BJ (cell line): ENCODE measurements at regions of chr6 and their contacts with region 1.

Region 1: GRCh38 chr6:149065658-149066556 is 251.6 kb upstream of the TAB2 start:
- DNase-seq: no peak
- H3K4me3 ChIP-seq: no peak overlapping the region
- H3K27me3 ChIP-seq: no peaks in the 10 kb centered on the region
- CTCF ChIP-seq: no peak

Region 2: DNA sequence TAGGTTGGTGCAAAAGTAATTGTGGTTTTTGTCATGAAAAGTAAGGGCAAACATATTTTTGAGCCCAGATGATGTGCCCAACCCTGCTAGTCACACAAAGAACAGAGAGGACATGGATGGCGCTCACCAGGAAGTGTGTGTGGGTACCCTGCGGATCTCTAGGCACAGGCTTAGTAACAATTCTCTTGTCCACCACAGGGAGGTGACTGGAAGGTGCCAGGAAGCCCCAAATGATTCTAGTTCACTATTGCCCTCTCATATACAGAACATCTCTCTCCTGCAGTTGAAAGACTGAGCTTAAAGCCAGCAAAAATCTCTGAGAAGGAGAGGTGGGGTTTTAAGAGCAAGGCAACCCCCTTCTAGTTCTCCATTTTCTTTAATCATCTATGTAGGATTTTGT is 20.5 kb before region 1 on chr6:
- CTCF ChIA-PET with region 1: no interaction called
- POLR2A ChIA-PET with region 1: no interaction called
- DNase-seq: no peak
- H3K4me3 ChIP-seq: no peak overlapping the region
- H3K27me3 ChIP-seq: no peaks in the 10 kb centered on the region
- CTCF ChIP-seq: no peak

Region 3: DNA sequence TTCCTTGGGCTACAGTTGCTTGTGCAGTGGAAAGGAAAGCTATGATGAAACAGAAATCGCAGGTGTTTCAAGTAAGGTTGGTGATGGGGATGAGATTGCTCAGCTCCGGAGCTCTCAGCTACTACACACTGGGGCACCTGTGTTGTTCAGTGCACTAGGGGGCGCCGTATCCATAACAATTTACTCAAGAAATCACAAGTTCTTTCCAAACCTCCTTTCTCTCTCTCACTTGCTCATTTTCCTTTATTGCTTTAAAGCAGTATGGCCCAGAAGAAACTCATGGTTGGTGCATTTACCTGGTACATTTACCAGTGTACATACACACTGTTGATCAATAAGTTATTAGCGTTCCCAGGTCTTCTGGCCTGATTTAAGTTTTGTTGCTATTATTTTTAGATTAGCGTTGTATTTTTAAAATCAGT is 16.4 kb after region 1 on chr6:
- CTCF ChIA-PET with region 1: interaction called, 4 read pairs
- POLR2A ChIA-PET with region 1: interaction called, 22 read pairs
- DNase-seq: no peak
- H3K4me3 ChIP-seq: no peak overlapping the region
- H3K27me3 ChIP-seq: no peaks in the 10 kb centered on the region
- CTCF ChIP-seq: peak; percentile 79